T-cell (primary cell): ENCODE measurements at regions of chr12 and their contacts with region 1.

Region 1: GRCh38 chr12:120194534-120195395 is at the start of gene GCN1:
- DNase-seq: peak; percentile 67 to 92 (median 84)
- ATAC-seq: peak; percentile 89 to 93 (median 92)
- H3K4me3 ChIP-seq: peak within 1 kb of the TSS; percentile 77 to 83
- H3K4me3 Mint-ChIP-seq: peak within 1 kb of the TSS; percentile 83 to 89 (median 86)
- H3K27ac ChIP-seq: peak within 1 kb of the TSS; percentile 84
- H3K27ac Mint-ChIP-seq: peak within 1 kb of the TSS; percentile 94 to 98
- H3K4me1 ChIP-seq: peaks cover 19 to 44% of the 10 kb centered on the region in 2 experiments
- H3K4me1 Mint-ChIP-seq: peaks cover 39 to 58% (median 51%) of the 10 kb centered on the region in 3 donors
- H3K27me3 ChIP-seq: no peaks in the 10 kb centered on the region
- H3K27me3 Mint-ChIP-seq: no peaks in the 10 kb centered on the region
- total RNA-seq, gene GCN1: 139 to 171 (median 161) TPM

Region 2: DNA sequence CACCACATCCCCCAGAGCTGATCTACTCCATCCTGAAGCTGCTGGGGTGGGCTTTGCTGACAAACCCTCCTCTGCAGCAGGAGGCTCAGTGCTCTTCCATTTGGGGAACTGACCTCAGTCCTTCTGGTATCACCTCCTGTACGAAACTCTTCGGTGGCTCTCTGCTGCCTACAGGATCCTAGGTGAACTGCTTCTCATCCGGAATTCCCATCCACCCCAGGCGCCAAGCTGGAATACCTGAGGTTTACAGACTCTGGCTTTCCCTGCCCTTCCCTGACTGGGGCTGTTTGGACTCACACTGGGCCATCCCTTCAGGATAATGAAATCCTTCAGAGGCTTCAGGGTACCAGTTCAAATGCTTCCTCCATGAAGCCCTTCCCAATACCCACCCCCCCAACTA is 26.4 kb before region 1 on chr12:
- CTCF ChIA-PET with region 1: no interaction called
- POLR2A ChIA-PET with region 1: interaction called, 6 to 14 read pairs
- DNase-seq: no peak
- ATAC-seq: no peak
- H3K4me3 ChIP-seq: no peak overlapping the region
- H3K4me3 Mint-ChIP-seq: no peak overlapping the region
- H3K27ac ChIP-seq: no peak overlapping the region
- H3K27ac Mint-ChIP-seq: no peak overlapping the region
- H3K4me1 ChIP-seq: no peaks in the 10 kb centered on the region
- H3K4me1 Mint-ChIP-seq: no peaks in the 10 kb centered on the region
- H3K27me3 ChIP-seq: no peaks in the 10 kb centered on the region
- H3K27me3 Mint-ChIP-seq: no peaks in the 10 kb centered on the region

Region 3: DNA sequence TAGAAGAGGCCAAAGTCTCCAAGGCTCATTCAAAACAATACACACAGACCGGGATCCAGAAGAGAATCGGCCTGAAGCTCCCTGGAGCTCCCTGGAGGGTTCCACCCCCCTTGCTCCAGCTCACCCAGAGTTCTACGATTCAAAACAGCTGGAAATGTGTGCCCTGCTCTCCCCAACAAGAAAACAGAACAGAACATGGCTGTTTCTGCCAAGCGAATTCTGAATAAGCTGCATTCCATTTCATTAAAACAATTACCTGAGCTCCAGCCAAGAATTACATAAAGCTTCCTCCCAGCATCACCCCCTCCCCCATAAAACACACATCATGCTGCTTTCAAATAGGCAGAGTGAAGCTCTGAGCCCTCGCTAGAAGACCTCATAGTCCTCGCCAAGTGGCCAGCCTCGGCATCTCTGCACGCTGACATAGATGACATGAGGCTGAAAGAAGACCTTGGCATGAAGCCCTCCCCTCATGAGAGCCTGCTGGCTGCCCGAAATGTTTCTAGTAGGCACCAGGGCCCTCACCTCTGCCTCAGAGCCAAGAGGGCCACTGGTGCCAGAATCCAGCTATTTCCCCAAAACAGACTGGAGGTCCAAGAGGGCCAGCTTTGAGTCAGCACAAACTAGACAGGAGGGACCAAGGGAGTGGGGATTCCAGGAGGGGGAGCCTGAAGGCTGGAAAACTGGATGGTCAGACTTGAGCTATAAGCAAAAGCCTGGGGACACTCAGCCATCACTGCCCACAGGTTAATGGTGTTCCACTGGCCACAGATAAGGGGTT is 62.5 kb after region 1 on chr12:
- CTCF ChIA-PET with region 1: interaction called, 3 to 11 read pairs
- POLR2A ChIA-PET with region 1: interaction called, 3 to 6 read pairs
- DNase-seq: no peak
- ATAC-seq: no peak
- H3K4me3 ChIP-seq: no peak overlapping the region
- H3K4me3 Mint-ChIP-seq: peak overlapping the region in 1 of 3 donors; percentile 97
- H3K27ac ChIP-seq: peak overlapping the region; percentile 43
- H3K27ac Mint-ChIP-seq: peak overlapping the region; percentile 88 to 89
- H3K4me1 ChIP-seq: peaks cover 42 to 100% of the 10 kb centered on the region in 2 experiments
- H3K4me1 Mint-ChIP-seq: peaks cover 93 to 96% (median 95%) of the 10 kb centered on the region in 3 donors
- H3K27me3 ChIP-seq: no peaks in the 10 kb centered on the region
- H3K27me3 Mint-ChIP-seq: no peaks in the 10 kb centered on the region

Region 4: GRCh38 chr12:120276734-120277133 is 82.0 kb after region 1 on chr12:
- CTCF ChIA-PET with region 1: no interaction called
- POLR2A ChIA-PET with region 1: no interaction called
- DNase-seq: no peak
- ATAC-seq: no peak
- H3K4me3 ChIP-seq: no peak overlapping the region
- H3K4me3 Mint-ChIP-seq: no peak overlapping the region
- H3K27ac ChIP-seq: no peak overlapping the region
- H3K27ac Mint-ChIP-seq: no peak overlapping the region
- H3K4me1 ChIP-seq: no peaks in the 10 kb centered on the region
- H3K4me1 Mint-ChIP-seq: no peaks in the 10 kb centered on the region
- H3K27me3 ChIP-seq: no peaks in the 10 kb centered on the region
- H3K27me3 Mint-ChIP-seq: no peaks in the 10 kb centered on the region